ENCODE measurements at regions of chr2 and their contacts with region 1.

Region 1: DNA sequence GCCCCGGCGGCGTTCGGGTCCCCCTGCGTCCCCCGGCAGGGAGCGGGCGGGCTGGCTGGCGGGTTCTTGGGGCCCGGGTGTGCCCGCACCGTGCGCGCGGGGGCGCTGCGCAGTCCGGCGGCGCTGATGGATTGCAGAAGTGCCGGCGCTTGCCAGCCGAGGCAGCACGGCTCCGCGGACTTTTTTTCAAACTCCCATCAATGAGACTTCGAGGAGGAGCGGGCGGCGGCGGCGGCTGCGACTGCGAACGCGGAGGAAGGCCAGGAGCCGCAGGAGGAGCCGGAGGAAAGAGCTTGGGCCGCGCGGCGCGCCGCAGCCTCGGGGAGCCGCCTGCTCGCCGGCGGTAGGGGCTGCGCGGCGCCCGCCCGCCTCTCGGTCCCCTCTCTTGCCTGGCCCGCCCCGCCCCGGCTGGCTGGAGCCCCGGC is at the start of gene GLI2:
- DNase-seq: peak; percentile 65 to 75
- ATAC-seq: peak; percentile 65 to 87 (median 80)
- H3K4me3 ChIP-seq: peak within 1 kb of the TSS; percentile 38 to 62 (median 58)
- H3K27ac ChIP-seq: peak within 1 kb of the TSS in 9 of 10 donors; percentile 44 to 87 (median 76)
- H3K4me1 ChIP-seq: peaks cover 2 to 22% (median 8%) of the 10 kb centered on the region in 9 donors
- H3K27me3 ChIP-seq: peaks cover 0 to 96% (median 85%) of the 10 kb centered on the region in 7 donors
- CTCF ChIP-seq: peak; percentile 50 to 81 (median 65)
- total RNA-seq, gene GLI2: 0.39 to 1.7 (median 1.0) TPM

Region 2: DNA sequence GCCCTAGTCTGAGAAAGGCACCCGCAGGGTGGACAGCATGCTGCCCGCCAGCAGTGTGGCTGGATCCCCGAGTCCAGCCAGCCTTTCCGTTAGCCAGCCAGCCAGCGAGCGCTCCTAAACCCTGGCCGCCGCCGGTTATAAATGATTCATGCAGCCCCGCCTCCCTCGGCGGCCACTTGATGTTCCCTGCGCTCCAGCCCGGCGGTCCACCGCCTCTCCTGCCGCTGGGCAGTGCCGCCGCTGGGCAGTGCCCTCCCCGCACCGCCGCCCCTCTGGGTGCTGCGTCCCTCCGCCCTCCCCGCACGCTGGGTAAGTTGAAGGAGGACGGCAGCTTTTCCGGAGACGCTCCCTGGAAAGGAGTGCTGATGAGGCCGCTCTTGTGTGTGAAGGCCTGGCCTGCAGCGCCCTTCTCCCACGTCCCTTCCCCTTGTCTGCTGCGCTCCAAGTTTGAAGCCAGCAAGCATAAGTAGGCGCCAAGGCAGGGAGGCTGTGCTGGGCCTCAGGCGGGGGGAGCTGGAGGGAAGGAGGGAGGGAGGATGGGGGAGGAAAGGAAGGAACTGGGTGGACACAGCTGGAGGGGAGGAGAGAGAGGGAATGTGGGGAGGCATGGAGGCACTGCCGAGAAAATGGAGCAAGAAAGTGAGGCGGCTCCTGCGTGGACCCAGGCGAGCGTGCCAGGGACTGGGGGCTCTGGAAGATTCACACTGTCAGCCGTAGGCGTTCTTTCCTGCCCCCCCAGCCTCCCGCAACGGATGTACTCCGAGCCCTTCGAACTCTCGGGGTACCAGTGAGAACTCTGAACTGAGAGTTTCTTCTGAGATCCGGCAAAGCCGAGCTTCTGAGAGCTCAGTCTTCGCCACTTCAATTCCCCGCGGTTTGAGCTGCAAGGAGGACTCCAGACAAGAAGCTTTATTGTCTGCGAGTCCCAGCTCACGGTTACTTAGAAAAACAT is 131.8 kb after region 1 on chr2:
- intact Hi-C with region 1: loop called in 1 of 10 experiments (anchors 10 kb)
- DNase-seq: peak; percentile 71 to 75
- ATAC-seq: peak; percentile 79 to 91 (median 86)
- H3K4me3 ChIP-seq: peak overlapping the region; percentile 12 to 52 (median 44)
- H3K27ac ChIP-seq: peak overlapping the region; percentile 26 to 85 (median 73)
- H3K4me1 ChIP-seq: peaks cover 0 to 37% (median 15%) of the 10 kb centered on the region in 9 donors
- H3K27me3 ChIP-seq: peaks cover 0 to 30% (median 14%) of the 10 kb centered on the region in 7 donors
- CTCF ChIP-seq: no peak

Region 3: DNA sequence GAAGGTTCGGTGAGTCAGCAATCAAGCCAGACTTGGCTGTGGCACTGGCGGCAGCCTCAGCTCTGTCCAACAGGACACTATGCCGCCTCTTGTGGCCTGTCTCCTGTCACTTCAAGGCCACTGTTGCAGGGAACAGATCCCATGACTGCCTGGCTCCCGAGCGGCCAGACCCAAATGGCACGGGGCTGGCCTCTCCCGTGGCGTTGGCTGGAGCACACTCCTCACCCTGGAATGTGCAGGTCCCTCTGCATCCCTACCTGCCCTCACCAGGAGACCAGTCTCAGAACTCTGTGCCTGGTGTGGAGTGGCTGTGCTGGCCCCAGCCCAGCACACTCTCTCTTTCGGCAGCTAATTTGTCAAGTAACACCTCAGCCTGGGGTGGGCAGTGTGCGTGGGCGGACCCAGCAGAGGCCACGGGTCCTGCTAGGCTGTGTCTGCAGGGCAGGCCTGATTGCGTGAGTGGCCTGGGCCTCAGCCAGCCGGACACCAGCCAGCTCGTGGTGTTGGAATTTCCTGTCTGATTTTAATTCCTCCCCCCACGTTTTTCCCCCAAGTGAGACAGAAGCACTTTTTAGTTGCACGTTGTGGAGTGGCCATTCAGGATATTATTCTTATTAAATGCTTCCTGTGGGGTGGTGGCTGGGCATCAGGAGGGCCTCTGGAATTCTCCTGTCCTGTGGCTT is 179.2 kb after region 1 on chr2:
- intact Hi-C with region 1: loop called in 2 of 10 experiments (anchors 10 kb)
- DNase-seq: peak; percentile 84 to 85
- ATAC-seq: peak; percentile 79 to 91 (median 86)
- H3K4me3 ChIP-seq: no peak overlapping the region
- H3K27ac ChIP-seq: peak overlapping the region; percentile 21 to 81 (median 74)
- H3K4me1 ChIP-seq: peaks cover 19 to 52% (median 37%) of the 10 kb centered on the region in 9 donors
- H3K27me3 ChIP-seq: no peaks in the 10 kb centered on the region
- CTCF ChIP-seq: peak in 5 of 9 donors; percentile 12 to 47 (median 43)

Region 4: GRCh38 chr2:120958623-120959366 is 223.0 kb after region 1 on chr2:
- intact Hi-C with region 1: loop called in 2 of 10 experiments (anchors 10 kb)
- DNase-seq: no peak
- ATAC-seq: no peak
- H3K4me3 ChIP-seq: no peak overlapping the region
- H3K27ac ChIP-seq: no peak overlapping the region
- H3K4me1 ChIP-seq: peaks cover 0 to 6% (median 0%) of the 10 kb centered on the region in 9 donors
- H3K27me3 ChIP-seq: no peaks in the 10 kb centered on the region
- CTCF ChIP-seq: no peak

Region 5: DNA sequence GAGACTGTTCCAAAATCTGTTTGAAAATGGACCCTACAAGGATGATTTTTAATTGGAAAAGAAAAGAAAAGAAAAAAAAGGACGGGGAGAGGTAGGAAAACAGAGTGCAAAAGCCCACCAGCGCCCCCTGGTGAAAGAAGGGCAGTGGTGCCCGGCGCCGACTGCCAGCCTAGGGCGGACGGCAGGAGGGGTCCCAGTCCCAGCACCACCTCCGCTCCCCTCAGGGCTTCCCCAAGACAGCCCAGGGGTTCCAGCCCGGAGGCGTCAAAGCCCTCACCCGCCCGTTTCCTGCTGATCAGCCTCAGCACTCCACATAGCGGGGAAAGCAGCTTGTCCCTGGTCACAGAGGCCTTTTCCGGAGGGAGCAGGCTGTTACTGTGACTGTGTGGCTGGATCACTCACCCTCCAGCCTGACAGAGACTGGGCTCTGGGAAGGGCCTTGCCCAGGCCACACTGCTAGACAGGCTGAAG is 335.3 kb after region 1 on chr2:
- intact Hi-C with region 1: loop called in 1 of 10 experiments (anchors 2 kb)
- DNase-seq: peak; percentile 41 to 74
- ATAC-seq: peak in 7 of 8 donors; percentile 36 to 77 (median 66)
- H3K4me3 ChIP-seq: no peak overlapping the region
- H3K27ac ChIP-seq: no peak overlapping the region
- H3K4me1 ChIP-seq: peaks cover 0 to 23% (median 3%) of the 10 kb centered on the region in 9 donors
- H3K27me3 ChIP-seq: peaks cover 0 to 53% (median 35%) of the 10 kb centered on the region in 7 donors
- CTCF ChIP-seq: peak; percentile 78 to 99 (median 92)